ENCODE measurements at regions of chr20 and their contacts with region 1.

Region 1: DNA sequence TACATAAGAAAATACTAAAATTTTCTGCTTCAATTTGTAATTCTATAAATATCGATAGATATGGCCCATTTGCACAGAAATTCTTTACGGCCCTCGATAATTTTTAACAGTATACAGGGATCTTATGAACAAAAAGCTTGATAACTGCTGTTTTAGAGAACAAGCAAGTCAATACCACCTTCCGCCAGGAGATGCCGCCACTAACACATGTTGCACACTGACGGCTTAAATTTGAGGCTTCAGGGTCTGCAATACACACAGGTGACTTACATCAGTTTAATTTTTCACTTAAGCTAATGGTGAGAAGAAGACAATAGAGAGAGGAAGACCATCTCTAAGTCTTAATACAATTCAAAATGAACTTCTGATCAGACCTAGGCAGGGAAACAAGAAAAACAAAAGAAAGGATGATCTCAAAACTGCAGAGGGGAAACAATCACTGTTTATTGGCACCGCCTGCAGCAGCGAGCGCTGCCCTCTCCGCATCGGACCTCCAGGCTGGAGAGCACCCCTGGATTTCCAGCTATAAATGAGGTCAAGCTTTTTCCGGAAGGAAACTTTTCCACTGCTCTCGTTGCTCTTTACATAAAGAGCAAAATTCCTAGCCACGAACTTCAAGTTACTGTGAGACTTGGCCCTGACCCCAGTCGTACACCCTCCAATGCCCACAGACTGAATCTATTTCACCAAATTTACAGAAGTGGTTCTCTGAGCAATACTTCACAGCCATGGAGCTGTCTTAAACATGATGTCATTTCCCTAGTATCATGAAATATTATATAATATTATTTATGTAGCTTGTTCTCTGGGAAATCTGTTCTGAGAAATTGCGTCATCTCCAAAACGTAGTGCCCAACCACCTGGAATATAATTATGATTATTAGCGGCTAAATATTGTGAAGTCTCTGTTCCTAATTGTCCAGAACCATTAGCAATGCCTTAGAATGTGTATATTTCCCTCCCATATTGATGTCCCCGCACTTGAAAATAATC is 54.1 kb downstream of the OTOR start:
- DNase-seq: peak; percentile 79
- H3K4me3 ChIP-seq: no peak overlapping the region
- H3K27ac ChIP-seq: no peak overlapping the region
- H3K4me1 ChIP-seq: peaks cover 28% of the 10 kb centered on the region
- H3K27me3 ChIP-seq: no peaks in the 10 kb centered on the region
- CTCF ChIP-seq: peak; percentile 90

Region 2: DNA sequence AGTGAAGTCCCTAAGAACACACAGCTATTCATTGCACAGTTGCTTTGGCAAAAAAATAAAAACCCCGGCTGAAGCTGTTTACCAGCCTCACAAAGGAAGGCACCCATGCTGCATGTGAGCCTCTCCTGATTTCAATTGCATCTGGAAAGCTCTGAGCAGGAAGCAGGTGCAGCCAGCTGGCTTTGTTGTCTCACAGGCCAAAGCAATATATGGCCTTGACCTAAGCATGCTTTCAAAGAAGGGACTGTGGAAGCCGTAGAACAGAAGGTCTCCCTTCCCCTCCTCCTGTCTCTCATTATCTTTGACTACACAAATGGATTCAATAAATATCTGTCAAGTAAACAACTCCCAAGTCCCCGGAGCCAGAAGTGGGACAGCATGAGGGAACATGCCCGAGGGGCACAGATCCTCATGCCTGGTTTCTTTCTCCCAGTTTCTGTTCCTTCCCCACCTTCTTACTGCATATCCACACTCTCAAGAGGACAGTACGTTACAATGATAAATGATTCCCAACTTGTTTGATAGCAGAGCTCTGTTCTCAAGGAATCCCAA is 367.4 kb after region 1 on chr20:
- CTCF ChIA-PET with region 1: no interaction called
- POLR2A ChIA-PET with region 1: interaction called, 4 read pairs
- intact Hi-C with region 1: loop called (anchors 2 kb)
- DNase-seq: peak; percentile 58
- H3K4me3 ChIP-seq: no peak overlapping the region
- H3K27ac ChIP-seq: peak overlapping the region; percentile 99
- H3K4me1 ChIP-seq: peaks cover 84% of the 10 kb centered on the region
- H3K27me3 ChIP-seq: no peaks in the 10 kb centered on the region
- CTCF ChIP-seq: no peak

Region 3: GRCh38 chr20:17281478-17281877 is 479.3 kb after region 1 on chr20:
- CTCF ChIA-PET with region 1: interaction called, 4 read pairs
- POLR2A ChIA-PET with region 1: no interaction called
- intact Hi-C with region 1: loop called (anchors 10 kb)
- DNase-seq: peak; percentile 49
- H3K4me3 ChIP-seq: no peak overlapping the region
- H3K27ac ChIP-seq: no peak overlapping the region
- H3K4me1 ChIP-seq: peaks cover 55% of the 10 kb centered on the region
- H3K27me3 ChIP-seq: no peaks in the 10 kb centered on the region
- CTCF ChIP-seq: peak; percentile 72

Region 4: DNA sequence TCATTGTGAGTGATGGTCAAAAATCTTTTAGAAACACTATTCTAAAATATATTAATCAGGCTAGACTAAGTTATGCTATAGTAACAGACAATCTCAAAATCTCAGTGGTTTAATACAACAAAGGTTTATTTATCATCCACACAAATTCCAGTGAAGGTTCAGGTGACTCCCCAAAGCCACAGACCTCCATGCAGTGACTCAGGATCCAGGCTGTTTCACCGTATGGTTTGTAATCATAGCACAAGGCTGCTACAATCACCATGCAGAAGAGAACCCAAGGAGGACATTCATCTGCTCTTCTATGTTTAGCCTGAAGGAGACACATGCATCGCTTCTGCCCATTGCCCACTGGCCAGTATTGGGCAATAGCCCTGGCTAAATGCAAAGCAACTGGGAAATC is 682.8 kb after region 1 on chr20:
- CTCF ChIA-PET with region 1: no interaction called
- POLR2A ChIA-PET with region 1: no interaction called
- intact Hi-C with region 1: loop called (anchors 5 kb)
- DNase-seq: no peak
- H3K4me3 ChIP-seq: no peak overlapping the region
- H3K27ac ChIP-seq: no peak overlapping the region
- H3K4me1 ChIP-seq: no peaks in the 10 kb centered on the region
- H3K27me3 ChIP-seq: no peaks in the 10 kb centered on the region
- CTCF ChIP-seq: no peak

Region 5: DNA sequence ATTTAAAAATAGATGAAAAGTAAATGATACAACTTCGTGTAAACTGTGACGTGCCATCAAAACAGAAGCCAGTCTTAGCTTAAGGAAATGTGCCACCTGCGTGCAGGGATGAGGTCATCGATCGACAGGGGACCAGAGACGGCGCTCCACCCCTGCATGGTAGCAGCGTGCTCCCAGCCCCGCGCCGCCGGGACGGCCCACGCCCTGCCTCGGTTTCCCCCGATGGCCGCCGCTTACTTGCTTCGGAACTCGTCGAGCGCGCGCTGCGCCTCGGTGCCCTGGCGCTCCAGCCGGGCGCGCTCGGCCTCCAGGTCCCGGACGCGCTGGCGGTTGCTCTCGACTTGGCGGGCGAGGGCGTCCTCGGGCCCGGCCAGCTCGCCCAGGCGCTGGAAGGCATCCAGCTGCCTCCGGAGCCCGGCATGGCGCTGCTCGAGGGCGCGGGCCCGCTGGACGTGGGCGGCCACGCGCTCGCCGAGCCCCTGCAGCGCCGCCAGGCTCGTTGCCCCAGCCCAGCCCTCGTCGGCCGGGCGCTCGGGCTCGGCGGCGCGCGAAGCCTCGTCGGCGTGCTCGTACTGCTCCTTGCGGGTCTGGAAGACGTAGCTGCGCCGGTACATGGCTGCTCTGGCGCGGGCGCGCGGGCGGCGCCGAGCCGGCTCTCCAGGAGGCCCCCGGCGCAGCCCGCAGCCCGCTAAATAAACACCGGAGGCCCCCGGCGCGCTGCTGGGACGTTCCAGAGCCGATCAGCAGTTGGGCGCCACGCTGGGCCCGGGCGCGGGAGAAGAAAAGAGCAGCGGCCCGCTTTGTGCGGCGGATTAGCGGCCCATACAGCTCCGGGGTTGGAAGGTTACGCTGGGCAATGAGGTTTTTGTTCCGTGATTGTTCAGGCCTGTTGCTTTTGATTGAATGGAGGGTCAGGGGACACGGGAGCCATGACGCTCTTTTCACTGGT is 728.8 kb after region 1 on chr20 and contains the start of gene BFSP1:
- CTCF ChIA-PET with region 1: interaction called, 4 read pairs
- POLR2A ChIA-PET with region 1: no interaction called
- intact Hi-C with region 1: loop called (anchors 5 kb)
- DNase-seq: peak; percentile 79
- H3K4me3 ChIP-seq: peak within 1 kb of the TSS; percentile 57
- H3K27ac ChIP-seq: peak within 1 kb of the TSS; percentile 88
- H3K4me1 ChIP-seq: peaks cover 23% of the 10 kb centered on the region
- H3K27me3 ChIP-seq: no peaks in the 10 kb centered on the region
- CTCF ChIP-seq: no peak
- total RNA-seq, gene BFSP1: 6.1 and 7.4 TPM in 2 replicates

Region 6: DNA sequence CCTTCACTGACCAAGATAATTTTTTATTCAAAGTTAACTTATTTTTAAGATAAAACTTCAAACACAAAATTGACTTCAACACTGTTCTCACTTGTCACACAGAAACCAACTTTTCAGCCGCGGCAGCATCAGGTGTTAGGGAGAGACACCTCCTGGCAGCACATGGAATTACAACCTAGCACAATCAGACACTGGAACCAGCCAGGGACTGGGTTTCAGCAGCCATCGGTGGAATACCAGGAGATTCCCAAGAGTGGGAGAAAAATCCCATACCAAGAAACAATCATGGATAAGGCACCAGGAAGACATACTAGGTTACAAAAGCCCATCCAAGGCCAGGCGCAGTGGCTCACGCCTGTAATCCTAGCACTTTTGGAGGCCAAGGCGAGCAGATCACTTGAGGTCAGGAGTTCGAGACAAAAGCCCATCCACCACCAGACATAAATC is 1096.4 kb after region 1 on chr20:
- CTCF ChIA-PET with region 1: no interaction called
- POLR2A ChIA-PET with region 1: no interaction called
- intact Hi-C with region 1: loop called (anchors 5 kb)
- DNase-seq: peak; percentile 73
- H3K4me3 ChIP-seq: no peak overlapping the region
- H3K27ac ChIP-seq: no peak overlapping the region
- H3K4me1 ChIP-seq: peaks cover 7% of the 10 kb centered on the region
- H3K27me3 ChIP-seq: no peaks in the 10 kb centered on the region
- CTCF ChIP-seq: peak; percentile 88